GM10248 (cell line): ENCODE measurements at regions of chr16 and their contacts with region 1.

Region 1: DNA sequence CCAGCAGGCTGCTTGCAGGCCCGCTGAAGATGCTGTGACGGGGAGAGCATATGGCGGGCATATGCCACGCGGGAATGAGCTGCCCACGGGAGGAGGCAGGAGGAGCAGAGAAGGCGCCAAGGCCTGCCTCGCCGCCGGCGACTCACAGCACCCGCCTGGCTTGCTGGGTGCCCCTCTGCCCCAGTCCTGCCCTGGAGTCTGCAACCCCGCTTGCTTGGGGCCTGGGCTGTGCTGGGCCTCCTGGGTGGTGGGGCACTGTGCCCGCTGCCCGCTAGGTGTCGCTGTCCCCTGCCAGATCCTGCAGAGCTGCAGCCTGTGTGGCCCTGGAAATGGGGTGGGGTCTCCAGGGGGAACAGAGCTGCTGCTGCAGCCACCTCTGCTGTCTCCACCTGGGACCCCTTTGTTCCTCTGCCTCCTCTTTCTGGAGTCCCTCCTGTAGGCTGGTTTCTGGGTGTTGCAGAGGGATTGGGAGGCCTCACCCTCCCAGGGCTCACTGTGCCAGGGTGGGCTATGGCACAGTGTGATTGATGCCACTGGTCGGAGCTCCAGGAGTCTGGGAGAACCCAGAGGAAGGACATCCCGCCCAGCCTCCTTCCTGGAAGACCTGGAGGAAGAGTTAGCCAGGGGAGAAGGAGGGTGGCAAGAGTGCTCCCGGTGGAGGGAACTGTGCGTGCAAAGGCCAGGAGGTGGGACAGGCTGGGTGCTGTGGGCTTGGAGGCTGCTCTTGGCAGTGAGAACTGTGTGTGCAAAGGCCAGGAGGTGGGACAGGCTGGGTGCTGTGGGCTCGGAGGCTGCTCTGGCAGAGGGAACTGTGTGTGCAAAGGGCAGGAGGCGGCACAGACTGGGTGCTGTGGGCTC is 141.0 kb upstream of the CIBAR2 start:
- DNase-seq: peak; percentile 90
- CTCF ChIP-seq: peak; percentile 98

Region 2: GRCh38 chr16:85104821-85105391 is 148.4 kb before region 1 on chr16:
- CTCF ChIA-PET with region 1: interaction called, 10 read pairs
- POLR2A ChIA-PET with region 1: no interaction called
- DNase-seq: peak; percentile 48
- CTCF ChIP-seq: no peak

Region 3: DNA sequence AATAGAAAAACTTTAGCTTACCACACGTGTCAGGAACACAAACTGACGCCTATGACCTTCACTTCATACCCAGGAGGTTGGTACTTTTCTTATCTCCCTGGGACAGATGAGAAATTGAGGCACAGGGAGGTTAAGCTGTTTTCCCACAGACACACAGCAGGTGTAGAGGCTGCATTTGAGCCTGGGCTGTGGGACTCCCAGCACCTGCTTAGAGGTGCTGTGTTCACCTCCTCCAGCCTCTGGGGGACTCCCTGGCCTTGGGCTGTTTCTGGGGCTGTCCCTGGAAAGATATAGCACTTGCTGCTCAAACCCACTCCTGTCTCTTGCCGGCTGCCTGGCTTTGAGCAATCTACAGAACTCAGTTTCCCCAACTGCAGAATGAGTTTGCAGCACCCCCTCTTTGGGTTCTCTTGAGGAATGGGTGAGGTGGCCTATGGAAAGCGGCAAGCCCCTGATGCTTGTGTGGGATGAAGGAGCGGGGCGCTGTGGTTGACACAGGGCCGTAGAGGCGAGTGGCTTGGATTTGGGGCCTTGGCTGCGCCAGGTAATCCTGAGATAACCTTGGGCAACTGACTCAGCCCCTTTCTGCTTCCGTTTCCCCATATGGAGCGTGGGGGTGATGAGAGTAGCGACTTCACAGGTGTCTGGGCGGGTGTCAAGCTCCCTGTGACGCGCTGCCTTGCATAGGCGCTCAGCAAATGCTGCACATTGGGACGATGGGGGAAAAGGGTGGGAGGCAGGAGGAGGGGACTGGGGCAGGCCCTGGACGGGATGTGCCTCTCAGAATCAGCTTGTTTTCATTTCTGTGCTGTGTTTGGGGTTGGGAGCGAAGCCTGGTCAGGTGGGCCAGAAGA is 36.6 kb before region 1 on chr16:
- CTCF ChIA-PET with region 1: interaction called, 10 read pairs
- POLR2A ChIA-PET with region 1: no interaction called
- DNase-seq: peak; percentile 73
- CTCF ChIP-seq: no peak

Region 4: DNA sequence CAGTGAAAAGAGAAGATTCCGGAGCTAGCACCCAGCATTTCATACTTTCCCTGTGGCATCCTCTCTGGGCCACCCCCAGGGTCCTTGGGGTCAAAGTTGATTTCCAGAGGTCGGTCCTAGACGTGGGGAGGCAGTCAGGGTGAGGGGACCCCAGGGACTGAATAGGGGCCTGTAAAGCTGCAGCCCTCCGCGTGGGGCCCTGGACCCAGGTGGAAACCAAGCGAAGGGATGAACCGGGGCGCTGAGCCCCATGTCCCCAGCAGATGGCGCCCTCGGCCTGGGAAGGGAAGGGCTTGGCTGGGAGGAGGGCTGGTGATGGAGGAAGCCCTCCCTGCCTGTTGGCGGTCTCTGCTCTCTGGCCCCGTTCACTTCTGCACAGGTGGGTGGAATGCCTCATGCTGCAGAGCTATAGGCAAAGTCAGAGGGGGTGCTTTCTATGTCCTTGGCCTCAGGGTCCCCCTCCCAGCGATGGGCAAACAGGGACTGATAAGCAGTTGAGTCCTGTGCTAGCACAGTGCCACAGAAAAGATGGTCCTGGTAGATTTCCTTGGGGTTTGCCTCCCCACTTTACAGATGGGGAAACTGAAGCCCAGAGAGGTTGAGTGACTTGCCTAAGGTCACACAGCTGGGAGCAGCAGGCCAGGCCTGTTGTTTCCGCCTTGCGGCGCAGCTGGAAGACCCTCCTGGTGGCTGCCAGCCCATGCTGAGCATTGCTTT is 22.4 kb after region 1 on chr16:
- CTCF ChIA-PET with region 1: interaction called, 24 read pairs
- POLR2A ChIA-PET with region 1: no interaction called
- DNase-seq: peak; percentile 91
- CTCF ChIP-seq: peak; percentile 88

Region 5: DNA sequence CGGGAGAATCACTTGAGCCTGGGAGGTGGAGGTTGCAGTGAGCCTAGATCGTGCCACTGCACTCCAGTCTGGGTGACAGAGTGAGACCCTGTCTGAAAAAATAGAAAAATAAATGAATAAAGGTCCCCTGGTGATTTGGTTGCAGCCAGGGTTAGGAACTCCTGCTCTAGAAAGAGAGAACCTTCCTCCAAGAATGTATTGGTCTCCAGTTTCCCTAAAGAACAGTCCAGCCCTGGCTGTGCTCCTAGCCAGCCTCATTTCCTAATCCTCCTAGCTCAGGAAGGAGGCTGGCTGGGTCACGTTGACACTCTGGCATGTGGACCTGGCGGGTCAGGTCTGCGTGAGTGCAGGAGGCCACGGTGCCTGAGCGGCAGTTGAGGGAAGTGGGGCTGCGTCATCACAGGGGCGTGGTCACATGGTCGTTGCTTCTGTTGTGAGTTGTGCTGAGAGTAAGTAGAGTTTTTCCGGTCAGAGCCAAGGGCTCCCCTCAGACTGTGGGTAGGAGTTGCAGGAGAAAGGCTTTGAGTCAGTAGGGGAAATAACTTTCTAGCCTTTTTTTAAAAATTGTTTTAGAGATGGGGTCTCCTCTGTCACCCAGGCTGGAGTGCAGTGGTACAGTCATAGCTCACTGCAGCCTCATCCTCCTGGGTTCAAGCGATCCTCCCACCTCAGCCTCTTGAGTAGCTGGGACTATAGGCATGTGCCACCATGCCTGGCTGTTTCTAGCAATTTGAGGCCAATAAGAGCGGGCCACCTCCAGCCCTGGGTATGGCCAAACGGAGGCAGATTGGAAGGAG is 52.9 kb after region 1 on chr16:
- CTCF ChIA-PET with region 1: interaction called, 12 read pairs
- POLR2A ChIA-PET with region 1: no interaction called
- DNase-seq: peak; percentile 84
- CTCF ChIP-seq: no peak